ENCODE measurements at regions of chr15 and their contacts with region 1.

Region 1: DNA sequence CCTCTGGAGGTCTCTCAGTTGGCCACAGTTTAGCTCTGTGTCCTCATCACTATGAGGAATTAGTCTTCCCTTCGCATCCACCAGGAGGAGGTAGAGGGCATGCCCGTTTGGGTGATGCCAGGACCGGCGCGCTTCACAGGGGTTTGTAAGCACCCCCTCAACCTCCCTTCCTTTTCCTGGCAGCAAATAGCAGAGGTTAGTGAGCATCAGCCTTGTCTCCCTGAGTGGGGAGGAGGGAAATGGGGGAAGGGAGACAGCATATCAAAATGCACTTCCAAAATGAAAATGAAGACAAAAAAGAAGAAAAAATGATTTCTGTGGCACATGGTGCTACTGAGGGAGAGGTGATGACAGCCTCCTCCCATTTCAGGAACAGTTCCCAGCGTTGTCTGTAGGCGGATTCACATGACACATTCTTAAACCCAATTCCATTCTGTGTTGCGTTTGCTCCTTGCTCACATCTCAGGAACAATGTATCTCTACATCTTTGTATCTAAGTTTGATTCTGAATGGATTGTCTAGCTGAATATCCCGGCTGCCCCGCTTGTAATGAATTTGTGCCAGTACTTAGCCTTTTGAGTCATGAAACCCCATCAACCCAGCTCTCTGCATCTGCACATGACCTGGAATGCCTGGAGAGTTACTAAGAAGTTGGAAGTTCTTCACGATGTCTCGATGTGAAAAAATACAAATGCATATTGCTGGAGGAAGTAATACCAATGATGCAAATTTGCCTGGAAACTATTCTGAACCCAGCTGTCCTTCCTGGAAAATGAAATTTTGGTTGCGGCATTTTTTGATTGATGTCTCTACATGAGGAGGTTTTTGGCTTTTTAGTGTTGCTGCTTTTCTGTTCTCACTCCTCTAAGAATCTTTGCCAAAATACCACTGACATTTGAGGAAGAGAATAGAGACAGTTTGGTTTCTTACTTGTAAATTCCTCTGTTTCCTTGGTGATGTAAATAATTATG is 45.2 kb downstream of the TYRO3 start:
- DNase-seq: peak; percentile 36 to 80 (median 44)
- ATAC-seq: peak; percentile 99
- H3K4me3 ChIP-seq: no peak overlapping the region
- H3K4me3 Mint-ChIP-seq: peak overlapping the region; percentile 38
- H3K27ac ChIP-seq: no peak overlapping the region
- H3K27ac Mint-ChIP-seq: no peak overlapping the region
- H3K4me1 ChIP-seq: peaks cover 6% of the 10 kb centered on the region
- H3K4me1 Mint-ChIP-seq: peaks cover 9% of the 10 kb centered on the region
- H3K27me3 ChIP-seq: no peaks in the 10 kb centered on the region
- H3K27me3 Mint-ChIP-seq: peaks cover 18% of the 10 kb centered on the region
- CTCF ChIP-seq: peak; percentile 84

Region 2: DNA sequence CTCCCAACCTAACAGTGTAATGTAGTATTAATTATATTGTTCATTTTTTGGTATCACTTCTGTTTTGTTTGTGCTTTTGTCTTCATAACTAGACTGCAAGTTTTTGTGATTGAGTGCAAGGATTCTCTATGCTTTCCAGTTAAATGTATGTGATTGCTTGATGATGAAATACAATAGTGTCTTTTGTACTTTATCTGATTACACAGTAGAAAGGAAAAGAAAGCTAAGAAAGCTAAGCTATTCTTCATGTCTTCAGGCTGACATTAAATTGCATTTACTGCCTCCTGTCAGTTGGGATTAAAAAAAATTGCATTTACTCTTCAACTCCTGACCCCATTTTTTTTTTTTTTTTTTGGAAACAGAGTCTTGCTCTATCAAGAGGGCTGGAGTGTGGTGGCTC is 158.8 kb before region 1 on chr15:
- CTCF ChIA-PET with region 1: no interaction called
- POLR2A ChIA-PET with region 1: no interaction called
- intact Hi-C with region 1: no loop called
- DNase-seq: no peak
- ATAC-seq: no peak
- H3K4me3 ChIP-seq: no peak overlapping the region
- H3K4me3 Mint-ChIP-seq: no peak overlapping the region
- H3K27ac ChIP-seq: no peak overlapping the region
- H3K27ac Mint-ChIP-seq: no peak overlapping the region
- H3K4me1 ChIP-seq: peaks cover 9% of the 10 kb centered on the region
- H3K4me1 Mint-ChIP-seq: peaks cover 20% of the 10 kb centered on the region
- H3K27me3 ChIP-seq: no peaks in the 10 kb centered on the region
- H3K27me3 Mint-ChIP-seq: no peaks in the 10 kb centered on the region
- CTCF ChIP-seq: no peak

Region 3: DNA sequence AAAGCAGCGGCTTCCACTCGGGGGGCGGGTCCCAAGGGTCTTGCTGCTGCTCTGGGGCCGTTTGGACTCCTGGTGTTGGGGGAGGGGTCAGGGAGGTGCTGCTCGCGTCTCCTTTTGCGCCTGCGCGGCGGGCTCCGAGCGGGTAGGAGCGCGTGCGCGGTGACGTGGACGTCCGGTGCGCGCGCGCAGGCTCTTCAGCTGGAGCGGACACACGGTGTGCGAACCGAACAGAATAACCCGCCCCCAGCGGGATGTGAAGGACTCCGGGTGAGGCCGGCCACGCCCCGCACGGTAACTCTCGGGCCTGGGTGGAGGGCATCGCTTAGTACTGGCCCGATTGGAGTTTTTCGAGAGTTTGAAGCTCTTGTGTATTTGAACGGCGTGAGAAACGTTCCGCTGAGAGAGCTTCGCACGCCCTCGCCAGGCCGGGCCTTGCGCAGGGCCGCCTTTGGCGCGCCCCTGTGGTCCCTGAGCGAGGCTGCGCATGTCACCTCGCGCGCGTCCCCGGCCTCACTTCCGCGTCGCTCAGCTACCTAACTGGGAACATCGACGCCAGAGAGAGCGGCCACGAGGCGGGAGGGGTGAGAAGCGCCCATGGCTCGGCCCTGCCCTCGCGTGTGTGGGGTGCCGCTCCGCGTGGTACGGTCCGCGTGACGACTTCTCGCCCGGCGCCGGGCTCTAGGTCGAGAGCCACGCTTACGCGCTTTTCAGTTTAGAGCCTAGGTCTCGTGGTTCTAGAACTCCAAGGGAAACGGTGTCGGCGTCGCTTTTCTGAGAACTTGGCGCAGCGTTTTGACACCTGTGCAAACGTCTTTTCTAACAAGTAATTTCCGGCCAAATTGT is 56.2 kb after region 1 on chr15 and contains the start of gene MGA:
- CTCF ChIA-PET with region 1: interaction called, 10 read pairs
- POLR2A ChIA-PET with region 1: interaction called, 5 read pairs
- intact Hi-C with region 1: loop called in 1 of 2 experiments (anchors 5 kb)
- DNase-seq: peak; percentile 77 to 96 (median 89)
- ATAC-seq: peak; percentile 79
- H3K4me3 ChIP-seq: peak within 1 kb of the TSS; percentile 65
- H3K4me3 Mint-ChIP-seq: peak within 1 kb of the TSS; percentile 83
- H3K27ac ChIP-seq: peak within 1 kb of the TSS; percentile 81 to 91
- H3K27ac Mint-ChIP-seq: peak within 1 kb of the TSS; percentile 89
- H3K4me1 ChIP-seq: peaks cover 32% of the 10 kb centered on the region
- H3K4me1 Mint-ChIP-seq: peaks cover 66% of the 10 kb centered on the region
- H3K27me3 ChIP-seq: no peaks in the 10 kb centered on the region
- H3K27me3 Mint-ChIP-seq: no peaks in the 10 kb centered on the region
- CTCF ChIP-seq: no peak
- total RNA-seq, gene MGA: 31.0 to 33.9 TPM

Region 4: DNA sequence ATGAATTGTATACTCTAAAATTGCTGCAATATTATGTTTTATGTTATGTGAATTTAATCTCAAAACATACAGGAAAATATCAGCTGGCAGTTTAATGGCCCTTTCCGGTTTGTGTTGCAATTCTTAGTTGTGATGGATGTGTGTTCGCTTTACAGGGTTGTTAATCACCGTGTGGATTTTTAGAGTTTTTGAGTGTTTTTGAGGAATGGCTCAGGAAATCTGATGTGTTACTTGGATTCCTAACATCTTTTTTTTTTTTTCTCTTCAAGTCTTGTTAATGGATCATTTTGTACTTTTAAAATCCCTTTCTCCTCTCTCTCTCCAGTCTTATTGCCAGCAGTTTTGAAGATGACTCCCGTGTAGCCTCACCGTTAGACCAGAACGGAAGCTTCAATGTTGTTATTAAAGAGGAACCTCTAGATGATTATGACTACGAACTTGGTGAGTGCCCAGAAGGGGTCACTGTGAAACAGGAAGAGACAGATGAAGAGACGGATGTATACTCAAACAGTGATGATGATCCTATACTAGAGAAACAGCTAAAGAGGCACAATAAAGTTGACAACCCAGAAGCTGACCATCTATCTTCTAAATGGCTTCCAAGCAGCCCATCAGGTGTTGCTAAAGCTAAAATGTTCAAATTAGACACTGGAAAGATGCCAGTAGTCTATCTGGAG is 91.7 kb after region 1 on chr15:
- CTCF ChIA-PET with region 1: interaction called, 8 read pairs
- POLR2A ChIA-PET with region 1: no interaction called
- intact Hi-C with region 1: loop called (anchors 5 to 10 kb)
- DNase-seq: peak in 12 of 14 experiments; percentile 7 to 78 (median 32)
- ATAC-seq: peak; percentile 96
- H3K4me3 ChIP-seq: no peak overlapping the region
- H3K4me3 Mint-ChIP-seq: peak overlapping the region; percentile 8
- H3K27ac ChIP-seq: no peak overlapping the region
- H3K27ac Mint-ChIP-seq: peak overlapping the region; percentile 54
- H3K4me1 ChIP-seq: peaks cover 7% of the 10 kb centered on the region
- H3K4me1 Mint-ChIP-seq: peaks cover 51% of the 10 kb centered on the region
- H3K27me3 ChIP-seq: no peaks in the 10 kb centered on the region
- H3K27me3 Mint-ChIP-seq: no peaks in the 10 kb centered on the region
- CTCF ChIP-seq: peak; percentile 63

Region 5: DNA sequence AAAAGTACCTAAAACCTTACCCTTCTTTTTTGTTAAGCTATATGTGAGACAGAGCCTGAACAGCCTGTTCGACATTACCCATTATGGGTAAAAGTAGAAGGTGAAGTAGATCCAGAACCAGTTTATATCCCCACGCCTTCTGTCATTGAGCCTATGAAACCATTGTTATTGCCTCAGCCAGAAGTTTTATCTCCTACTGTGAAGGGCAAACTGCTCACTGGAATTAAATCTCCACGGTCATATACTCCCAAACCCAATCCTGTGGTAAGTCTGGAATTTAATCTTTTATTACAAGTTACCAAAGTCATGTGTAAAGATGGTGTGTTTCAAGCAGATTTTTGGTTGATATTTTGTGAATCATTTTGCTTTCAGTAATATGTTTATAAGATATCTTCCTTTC is 122.9 kb after region 1 on chr15:
- CTCF ChIA-PET with region 1: interaction called, 4 read pairs
- POLR2A ChIA-PET with region 1: no interaction called
- intact Hi-C with region 1: loop called in 1 of 2 experiments (anchors 10 kb)
- DNase-seq: no peak
- ATAC-seq: no peak
- H3K4me3 ChIP-seq: no peak overlapping the region
- H3K4me3 Mint-ChIP-seq: no peak overlapping the region
- H3K27ac ChIP-seq: no peak overlapping the region
- H3K27ac Mint-ChIP-seq: no peak overlapping the region
- H3K4me1 ChIP-seq: no peaks in the 10 kb centered on the region
- H3K4me1 Mint-ChIP-seq: peaks cover 10% of the 10 kb centered on the region
- H3K27me3 ChIP-seq: no peaks in the 10 kb centered on the region
- H3K27me3 Mint-ChIP-seq: no peaks in the 10 kb centered on the region
- CTCF ChIP-seq: no peak

Region 6: GRCh38 chr15:41746802-41747201 is 142.6 kb after region 1 on chr15:
- CTCF ChIA-PET with region 1: no interaction called
- POLR2A ChIA-PET with region 1: no interaction called
- intact Hi-C with region 1: loop called in 1 of 2 experiments (anchors 5 kb)
- DNase-seq: no peak
- ATAC-seq: no peak
- H3K4me3 ChIP-seq: no peak overlapping the region
- H3K4me3 Mint-ChIP-seq: no peak overlapping the region
- H3K27ac ChIP-seq: no peak overlapping the region
- H3K27ac Mint-ChIP-seq: no peak overlapping the region
- H3K4me1 ChIP-seq: no peaks in the 10 kb centered on the region
- H3K4me1 Mint-ChIP-seq: peaks cover 6% of the 10 kb centered on the region
- H3K27me3 ChIP-seq: no peaks in the 10 kb centered on the region
- H3K27me3 Mint-ChIP-seq: no peaks in the 10 kb centered on the region
- CTCF ChIP-seq: no peak

Region 7: DNA sequence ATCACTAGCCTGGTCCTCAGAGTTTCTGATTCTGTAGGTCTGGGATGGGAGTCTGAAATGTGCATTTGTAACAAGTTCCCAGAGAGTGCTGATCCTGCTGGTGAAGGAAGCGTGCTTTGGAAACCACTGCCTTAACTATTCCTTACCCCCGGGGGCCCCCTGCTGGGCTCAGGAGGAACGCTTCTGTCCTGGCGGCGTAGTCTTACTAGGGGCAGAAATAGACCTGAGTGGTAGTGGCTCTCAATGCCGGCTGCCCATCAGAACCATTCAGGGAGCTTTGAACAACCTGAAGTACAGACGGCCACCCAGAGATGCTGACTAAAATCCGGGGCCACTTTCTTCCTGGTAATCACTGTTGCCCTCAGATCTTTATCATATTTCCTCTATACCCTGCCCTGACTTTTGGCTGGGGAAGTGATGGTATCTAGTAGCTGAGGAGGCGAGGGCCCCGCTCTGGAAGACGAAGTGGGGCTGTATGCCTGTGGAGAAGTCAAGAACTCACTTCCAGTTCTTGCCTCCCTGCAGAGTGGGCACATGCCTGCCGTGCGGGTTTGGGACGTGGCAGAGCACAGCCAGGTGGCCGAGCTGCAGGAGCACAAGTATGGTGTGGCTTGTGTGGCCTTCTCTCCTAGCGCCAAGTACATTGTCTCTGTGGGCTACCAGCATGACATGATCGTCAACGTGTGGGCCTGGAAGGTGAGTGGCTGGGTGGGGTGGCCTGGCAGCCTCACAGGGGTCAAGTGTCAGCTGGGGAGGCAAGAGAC is 207.4 kb after region 1 on chr15:
- CTCF ChIA-PET with region 1: no interaction called
- POLR2A ChIA-PET with region 1: no interaction called
- intact Hi-C with region 1: loop called (anchors 1 kb)
- DNase-seq: peak; percentile 62 to 88 (median 70)
- ATAC-seq: peak; percentile 97
- H3K4me3 ChIP-seq: no peak overlapping the region
- H3K4me3 Mint-ChIP-seq: no peak overlapping the region
- H3K27ac ChIP-seq: no peak overlapping the region
- H3K27ac Mint-ChIP-seq: peak overlapping the region; percentile 43
- H3K4me1 ChIP-seq: peaks cover 19% of the 10 kb centered on the region
- H3K4me1 Mint-ChIP-seq: peaks cover 12% of the 10 kb centered on the region
- H3K27me3 ChIP-seq: no peaks in the 10 kb centered on the region
- H3K27me3 Mint-ChIP-seq: no peaks in the 10 kb centered on the region
- CTCF ChIP-seq: peak; percentile 92

Region 8: DNA sequence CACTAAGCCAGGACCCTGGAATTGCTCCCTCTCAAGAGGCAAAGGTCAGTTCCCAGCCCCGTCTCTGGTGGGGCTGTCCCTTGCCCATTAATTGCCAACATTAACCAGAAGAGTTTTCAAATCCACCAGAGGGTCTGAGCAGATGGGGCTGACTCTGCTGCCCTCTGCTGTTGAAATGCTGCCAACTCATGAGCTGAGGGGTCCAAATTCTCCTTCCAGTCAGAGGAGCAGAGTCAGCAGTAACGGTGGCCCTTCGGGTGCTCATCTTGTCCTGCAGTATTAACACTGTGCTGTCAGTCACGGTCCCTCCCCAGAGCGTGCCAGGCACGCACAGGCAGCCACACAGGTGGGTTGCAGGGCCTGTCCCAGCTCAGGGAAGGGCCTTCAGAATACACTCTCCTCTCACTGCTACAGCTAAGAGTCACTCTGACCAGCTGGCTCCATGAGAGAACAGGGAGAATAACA is 300.3 kb after region 1 on chr15:
- CTCF ChIA-PET with region 1: no interaction called
- POLR2A ChIA-PET with region 1: no interaction called
- intact Hi-C with region 1: loop called (anchors 1 to 2 kb)
- DNase-seq: peak; percentile 63 to 85 (median 71)
- ATAC-seq: peak; percentile 88
- H3K4me3 ChIP-seq: no peak overlapping the region
- H3K4me3 Mint-ChIP-seq: no peak overlapping the region
- H3K27ac ChIP-seq: no peak overlapping the region
- H3K27ac Mint-ChIP-seq: peak overlapping the region; percentile 80
- H3K4me1 ChIP-seq: peaks cover 10% of the 10 kb centered on the region
- H3K4me1 Mint-ChIP-seq: peaks cover 7% of the 10 kb centered on the region
- H3K27me3 ChIP-seq: no peaks in the 10 kb centered on the region
- H3K27me3 Mint-ChIP-seq: no peaks in the 10 kb centered on the region
- CTCF ChIP-seq: peak; percentile 95

Measured in CD4-positive, alpha-beta T cell (primary cell).